Endothelial cell of umbilical vein (primary cell): ENCODE measurements at regions of chr2 and their contacts with region 1.

Region 1: GRCh38 chr2:223760838-223761502 is 76.4 kb downstream of the AP1S3 start:
- DNase-seq: peak; percentile 84
- H3K4me3 ChIP-seq: no peak overlapping the region
- H3K27ac ChIP-seq: peak overlapping the region; percentile 66
- H3K4me1 ChIP-seq: peaks cover 39% of the 10 kb centered on the region
- H3K27me3 ChIP-seq: no peaks in the 10 kb centered on the region
- CTCF ChIP-seq: no peak
- POLR2A ChIP-seq: no peak

Region 2: DNA sequence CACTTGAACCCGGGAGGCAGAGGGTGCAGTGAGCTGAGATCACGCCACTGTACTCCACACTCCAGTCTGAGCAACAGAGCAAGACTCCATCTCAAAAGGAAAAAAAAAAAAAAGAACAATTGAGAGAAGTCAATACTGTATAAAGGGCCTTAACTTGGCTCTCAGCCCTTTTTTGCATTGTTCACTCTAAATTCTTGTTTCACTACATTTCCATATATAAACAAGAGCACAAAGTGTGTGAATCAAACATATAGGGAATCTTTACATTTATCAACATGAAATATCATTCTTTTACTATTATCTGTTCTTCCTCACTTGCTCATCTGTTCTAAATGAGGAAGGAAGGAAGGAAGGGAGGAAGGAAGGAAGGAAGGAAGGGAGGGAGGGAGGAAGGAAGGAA is 14.4 kb before region 1 on chr2:
- CTCF ChIA-PET with region 1: interaction called, 4 read pairs
- POLR2A ChIA-PET with region 1: no interaction called
- dilution Hi-C with region 1: no loop called
- intact Hi-C with region 1: loop called (anchors 1 kb)
- DNase-seq: peak; percentile 61
- H3K4me3 ChIP-seq: no peak overlapping the region
- H3K27ac ChIP-seq: no peak overlapping the region
- H3K4me1 ChIP-seq: no peaks in the 10 kb centered on the region
- H3K27me3 ChIP-seq: no peaks in the 10 kb centered on the region
- CTCF ChIP-seq: no peak
- POLR2A ChIP-seq: no peak

Region 3: DNA sequence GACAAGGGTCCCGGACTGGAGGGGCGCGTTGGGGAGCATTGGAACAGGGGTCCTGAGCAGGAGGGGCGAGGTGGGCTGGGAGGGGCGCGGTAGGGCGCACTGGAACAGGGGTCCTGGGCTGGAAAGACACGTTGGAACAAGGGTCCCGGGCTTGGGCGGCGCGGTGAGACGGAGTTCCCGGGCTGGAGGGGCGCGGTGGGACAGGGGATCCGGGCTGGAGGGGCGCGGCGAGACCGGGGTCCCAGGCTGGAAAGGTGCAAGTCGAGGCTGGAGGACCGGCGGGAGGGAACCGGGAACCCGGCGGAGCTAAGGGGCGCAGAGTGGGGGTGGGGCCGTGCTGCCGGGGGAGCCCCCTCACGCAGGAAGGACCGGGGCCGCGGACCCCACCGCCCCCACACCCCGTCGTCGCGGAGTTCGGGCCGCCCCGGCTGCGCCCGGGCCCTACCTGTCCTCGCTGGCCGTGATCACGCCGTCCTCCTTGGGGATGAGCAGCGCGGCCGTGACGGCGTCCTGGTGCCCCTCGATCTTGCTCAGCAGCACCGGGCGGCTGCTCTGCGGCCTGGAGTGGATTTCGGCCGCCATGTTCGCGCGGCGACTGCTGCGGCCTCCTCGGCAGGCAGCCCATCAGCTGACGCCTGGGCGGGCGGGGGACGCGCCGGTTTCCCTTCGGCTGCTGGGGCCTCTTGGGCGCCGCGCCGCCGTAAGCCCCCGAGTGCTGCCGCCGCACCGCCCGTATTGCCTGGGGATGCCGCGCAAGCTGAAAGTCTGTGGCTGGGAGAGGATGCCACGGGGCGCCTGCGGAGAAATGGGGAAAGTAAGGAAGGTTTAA is 183.9 kb after region 1 on chr2 and contains the start of gene WDFY1:
- CTCF ChIA-PET with region 1: no interaction called
- POLR2A ChIA-PET with region 1: no interaction called
- dilution Hi-C with region 1: no loop called
- intact Hi-C with region 1: no loop called
- DNase-seq: peak; percentile 87
- H3K4me3 ChIP-seq: peak within 1 kb of the TSS; percentile 70 to 79 (median 77)
- H3K27ac ChIP-seq: peak within 1 kb of the TSS; percentile 90
- H3K4me1 ChIP-seq: peaks cover 23% of the 10 kb centered on the region
- H3K27me3 ChIP-seq: no peaks in the 10 kb centered on the region
- CTCF ChIP-seq: no peak
- POLR2A ChIP-seq: peak; percentile 90
- total RNA-seq, gene WDFY1: 66.0 and 68.7 TPM in 2 replicates